ENCODE measurements at regions of chr13 and their contacts with region 1.

Region 1: DNA sequence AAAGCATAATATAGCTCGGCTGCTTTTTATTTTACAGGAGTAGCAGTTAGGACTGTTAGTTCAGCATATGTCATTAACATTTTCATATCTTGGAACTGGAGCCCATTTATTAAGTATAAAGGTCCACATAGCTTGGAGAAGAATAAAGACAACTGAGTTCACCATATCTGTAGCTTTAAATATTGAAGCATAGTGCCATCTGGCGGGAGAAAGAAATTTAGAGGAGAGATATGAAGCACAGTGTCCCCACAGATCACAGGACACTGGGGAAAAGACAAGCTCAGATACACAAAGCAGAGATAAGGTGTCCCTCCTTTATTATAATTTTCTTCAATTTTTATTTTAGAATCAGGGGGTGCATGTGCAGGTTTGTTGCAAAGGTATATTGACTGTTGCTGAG is 104.7 kb upstream of the FREM2 start:
- DNase-seq: peak; percentile 34
- H3K4me3 Mint-ChIP-seq: no peak overlapping the region
- H3K27ac Mint-ChIP-seq: no peak overlapping the region
- H3K4me1 Mint-ChIP-seq: no peaks in the 10 kb centered on the region
- H3K27me3 Mint-ChIP-seq: no peaks in the 10 kb centered on the region
- CTCF ChIP-seq: peak; percentile 22

Region 2: DNA sequence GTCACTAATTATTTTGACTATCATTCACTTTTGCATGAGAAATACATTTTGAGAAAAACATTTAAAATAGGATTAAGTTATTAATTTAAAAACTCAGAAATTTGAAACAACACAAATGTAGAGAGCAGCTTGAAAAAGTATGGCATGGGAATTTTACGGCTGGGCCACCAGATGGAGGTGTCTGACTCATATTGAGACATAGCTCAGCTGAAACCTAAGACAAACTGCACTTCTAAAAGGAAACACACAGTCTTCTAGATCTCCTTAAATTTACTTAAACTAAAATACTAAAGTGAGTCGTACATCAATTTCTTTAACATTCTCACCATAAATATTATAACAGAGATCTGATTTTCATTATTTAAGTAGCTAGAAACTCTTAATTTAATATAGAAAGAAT is 941.6 kb before region 1 on chr13:
- CTCF ChIA-PET with region 1: interaction called, 6 read pairs
- intact Hi-C with region 1: loop called (anchors 5 kb)
- DNase-seq: peak; percentile 28
- H3K4me3 Mint-ChIP-seq: no peak overlapping the region
- H3K27ac Mint-ChIP-seq: no peak overlapping the region
- H3K4me1 Mint-ChIP-seq: no peaks in the 10 kb centered on the region
- H3K27me3 Mint-ChIP-seq: no peaks in the 10 kb centered on the region
- CTCF ChIP-seq: no peak

Region 3: GRCh38 chr13:38045307-38046048 is 536.7 kb before region 1 on chr13:
- CTCF ChIA-PET with region 1: no interaction called
- intact Hi-C with region 1: loop called (anchors 5 kb)
- DNase-seq: peak; percentile 23
- H3K4me3 Mint-ChIP-seq: no peak overlapping the region
- H3K27ac Mint-ChIP-seq: no peak overlapping the region
- H3K4me1 Mint-ChIP-seq: no peaks in the 10 kb centered on the region
- H3K27me3 Mint-ChIP-seq: no peaks in the 10 kb centered on the region
- CTCF ChIP-seq: peak; percentile 33

Region 4: GRCh38 chr13:38366954-38367645 is 215.0 kb before region 1 on chr13:
- CTCF ChIA-PET with region 1: no interaction called
- intact Hi-C with region 1: loop called (anchors 10 kb)
- DNase-seq: no peak
- H3K4me3 Mint-ChIP-seq: no peak overlapping the region
- H3K27ac Mint-ChIP-seq: no peak overlapping the region
- H3K4me1 Mint-ChIP-seq: peaks cover 7% of the 10 kb centered on the region
- H3K27me3 Mint-ChIP-seq: no peaks in the 10 kb centered on the region
- CTCF ChIP-seq: no peak

Region 5: DNA sequence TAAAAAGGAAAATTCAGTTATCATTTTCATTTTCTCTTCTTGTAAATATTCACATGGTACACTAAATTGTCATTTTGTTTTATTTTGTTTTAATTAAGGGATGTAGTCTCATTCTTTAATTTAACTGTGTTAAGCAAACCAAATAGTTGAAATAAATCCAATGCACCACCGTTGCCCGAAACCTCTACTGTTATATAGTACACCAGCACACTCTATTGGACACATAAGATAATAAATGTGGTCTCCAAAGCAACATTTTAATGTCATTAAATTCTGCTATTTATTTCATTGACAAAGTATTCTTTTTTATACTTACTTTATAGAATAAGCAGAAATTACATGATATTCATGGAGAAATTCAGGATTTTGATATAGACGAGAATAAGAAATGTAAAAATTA is 51.6 kb before region 1 on chr13:
- CTCF ChIA-PET with region 1: interaction called, 3 read pairs
- intact Hi-C with region 1: loop called (anchors 5 kb)
- DNase-seq: no peak
- H3K4me3 Mint-ChIP-seq: no peak overlapping the region
- H3K27ac Mint-ChIP-seq: no peak overlapping the region
- H3K4me1 Mint-ChIP-seq: no peaks in the 10 kb centered on the region
- H3K27me3 Mint-ChIP-seq: no peaks in the 10 kb centered on the region
- CTCF ChIP-seq: no peak

Region 6: GRCh38 chr13:38641164-38641951 is 59.2 kb after region 1 on chr13:
- CTCF ChIA-PET with region 1: interaction called, 10 read pairs
- intact Hi-C with region 1: no loop called
- DNase-seq: no peak
- H3K4me3 Mint-ChIP-seq: no peak overlapping the region
- H3K27ac Mint-ChIP-seq: no peak overlapping the region
- H3K4me1 Mint-ChIP-seq: peaks cover 39% of the 10 kb centered on the region
- H3K27me3 Mint-ChIP-seq: no peaks in the 10 kb centered on the region
- CTCF ChIP-seq: no peak

Measured in Calu3 (cell line).